ENCODE measurements at regions of chr15 and their contacts with region 1.

Region 1: GRCh38 chr15:73950831-73951561 is 24.7 kb downstream of the LOXL1 start:
- DNase-seq: peak; percentile 87
- H3K4me3 Mint-ChIP-seq: no peak overlapping the region
- H3K27ac Mint-ChIP-seq: no peak overlapping the region
- H3K4me1 Mint-ChIP-seq: peaks cover 15% of the 10 kb centered on the region
- H3K27me3 Mint-ChIP-seq: peaks cover 49% of the 10 kb centered on the region

Region 2: DNA sequence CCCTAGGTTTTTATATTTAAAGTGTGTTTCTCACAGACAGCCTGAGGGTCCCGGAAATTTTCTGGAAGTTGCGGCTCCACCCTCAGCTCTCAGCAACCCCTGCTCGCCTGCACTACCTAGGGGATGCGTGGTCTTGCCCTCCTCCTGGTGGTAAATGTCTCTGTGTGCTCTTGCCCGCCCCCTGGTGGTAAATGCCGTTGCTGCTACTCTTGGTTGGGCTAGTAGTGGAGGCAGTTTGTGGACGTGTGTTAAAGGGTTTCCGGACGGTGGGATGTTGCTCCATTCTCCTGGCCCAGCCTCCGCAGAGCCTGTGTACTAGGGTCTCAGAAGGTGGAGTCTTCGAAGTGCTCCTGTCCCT is 13.7 kb after region 1 on chr15:
- CTCF ChIA-PET with region 1: interaction called, 94 read pairs
- DNase-seq: peak; percentile 92
- H3K4me3 Mint-ChIP-seq: peak overlapping the region; percentile 35
- H3K27ac Mint-ChIP-seq: peak overlapping the region; percentile 74
- H3K4me1 Mint-ChIP-seq: peaks cover 44% of the 10 kb centered on the region
- H3K27me3 Mint-ChIP-seq: peaks cover 5% of the 10 kb centered on the region

Measured in activated naive CD4-positive, alpha-beta T cell treated with anti-CD3 and anti-CD28 coated beads, Interleukin-2, amount 10 ng/mL, durations not matched to agents 7 days and 5 days (primary cell).